ENCODE measurements at regions of chr14 and their contacts with region 1.

Region 1: GRCh38 chr14:22900081-22900799 is 17.2 kb downstream of the REM2 start:
- DNase-seq: peak in 2 of 5 donors; percentile 49 to 57
- H3K4me3 ChIP-seq: no peak overlapping the region
- H3K4me3 Mint-ChIP-seq: no peak overlapping the region
- H3K27ac ChIP-seq: no peak overlapping the region
- H3K27ac Mint-ChIP-seq: peak overlapping the region in 6 of 8 donors; percentile 0 to 65 (median 26)
- H3K4me1 ChIP-seq: peaks cover 7% of the 10 kb centered on the region
- H3K4me1 Mint-ChIP-seq: peaks cover 5 to 10% (median 5%) of the 10 kb centered on the region in 3 donors
- H3K27me3 ChIP-seq: no peaks in the 10 kb centered on the region
- H3K27me3 Mint-ChIP-seq: no peaks in the 10 kb centered on the region

Region 2: GRCh38 chr14:22822571-22823098 is 77.6 kb before region 1 on chr14:
- CTCF ChIA-PET with region 1: interaction called, 70 read pairs
- POLR2A ChIA-PET with region 1: no interaction called
- DNase-seq: peak; percentile 53 to 81 (median 57)
- H3K4me3 ChIP-seq: peak overlapping the region; percentile 13
- H3K4me3 Mint-ChIP-seq: peak overlapping the region in 6 of 7 donors; percentile 41 to 72 (median 66)
- H3K27ac ChIP-seq: no peak overlapping the region
- H3K27ac Mint-ChIP-seq: peak overlapping the region in 1 of 8 donors; percentile 15
- H3K4me1 ChIP-seq: peaks cover 19% of the 10 kb centered on the region
- H3K4me1 Mint-ChIP-seq: peaks cover 8 to 12% (median 9%) of the 10 kb centered on the region in 3 donors
- H3K27me3 ChIP-seq: no peaks in the 10 kb centered on the region
- H3K27me3 Mint-ChIP-seq: peaks cover 35 to 45% of the 10 kb centered on the region in 2 donors

Region 3: GRCh38 chr14:23009939-23010726 is 109.9 kb after region 1 on chr14 and contains the start of gene C14orf93:
- CTCF ChIA-PET with region 1: no interaction called
- POLR2A ChIA-PET with region 1: no interaction called
- DNase-seq: peak; percentile 70 to 84 (median 72)
- H3K4me3 ChIP-seq: peak within 1 kb of the TSS; percentile 85
- H3K4me3 Mint-ChIP-seq: peak within 1 kb of the TSS; percentile 90 to 99 (median 94)
- H3K27ac ChIP-seq: peak within 1 kb of the TSS; percentile 86
- H3K27ac Mint-ChIP-seq: peak within 1 kb of the TSS; percentile 92 to 98 (median 94)
- H3K4me1 ChIP-seq: peaks cover 36% of the 10 kb centered on the region
- H3K4me1 Mint-ChIP-seq: peaks cover 37 to 52% (median 52%) of the 10 kb centered on the region in 3 donors
- H3K27me3 ChIP-seq: no peaks in the 10 kb centered on the region
- H3K27me3 Mint-ChIP-seq: no peaks in the 10 kb centered on the region
- total RNA-seq, gene C14orf93: 7.5 to 8.3 TPM

Region 4: GRCh38 chr14:23034483-23035302 is 134.5 kb after region 1 on chr14 and contains the start of gene PSMB5:
- CTCF ChIA-PET with region 1: no interaction called
- POLR2A ChIA-PET with region 1: no interaction called
- DNase-seq: peak; percentile 75 to 93 (median 90)
- H3K4me3 ChIP-seq: peak within 1 kb of the TSS; percentile 80
- H3K4me3 Mint-ChIP-seq: peak within 1 kb of the TSS; percentile 83 to 98 (median 89)
- H3K27ac ChIP-seq: peak within 1 kb of the TSS; percentile 90
- H3K27ac Mint-ChIP-seq: peak within 1 kb of the TSS; percentile 92 to 100 (median 98)
- H3K4me1 ChIP-seq: peaks cover 19% of the 10 kb centered on the region
- H3K4me1 Mint-ChIP-seq: peaks cover 27 to 36% (median 35%) of the 10 kb centered on the region in 3 donors
- H3K27me3 ChIP-seq: no peaks in the 10 kb centered on the region
- H3K27me3 Mint-ChIP-seq: peaks cover 0 to 1% of the 10 kb centered on the region in 2 donors
- total RNA-seq, gene PSMB5: 186 to 198 TPM

Region 5: DNA sequence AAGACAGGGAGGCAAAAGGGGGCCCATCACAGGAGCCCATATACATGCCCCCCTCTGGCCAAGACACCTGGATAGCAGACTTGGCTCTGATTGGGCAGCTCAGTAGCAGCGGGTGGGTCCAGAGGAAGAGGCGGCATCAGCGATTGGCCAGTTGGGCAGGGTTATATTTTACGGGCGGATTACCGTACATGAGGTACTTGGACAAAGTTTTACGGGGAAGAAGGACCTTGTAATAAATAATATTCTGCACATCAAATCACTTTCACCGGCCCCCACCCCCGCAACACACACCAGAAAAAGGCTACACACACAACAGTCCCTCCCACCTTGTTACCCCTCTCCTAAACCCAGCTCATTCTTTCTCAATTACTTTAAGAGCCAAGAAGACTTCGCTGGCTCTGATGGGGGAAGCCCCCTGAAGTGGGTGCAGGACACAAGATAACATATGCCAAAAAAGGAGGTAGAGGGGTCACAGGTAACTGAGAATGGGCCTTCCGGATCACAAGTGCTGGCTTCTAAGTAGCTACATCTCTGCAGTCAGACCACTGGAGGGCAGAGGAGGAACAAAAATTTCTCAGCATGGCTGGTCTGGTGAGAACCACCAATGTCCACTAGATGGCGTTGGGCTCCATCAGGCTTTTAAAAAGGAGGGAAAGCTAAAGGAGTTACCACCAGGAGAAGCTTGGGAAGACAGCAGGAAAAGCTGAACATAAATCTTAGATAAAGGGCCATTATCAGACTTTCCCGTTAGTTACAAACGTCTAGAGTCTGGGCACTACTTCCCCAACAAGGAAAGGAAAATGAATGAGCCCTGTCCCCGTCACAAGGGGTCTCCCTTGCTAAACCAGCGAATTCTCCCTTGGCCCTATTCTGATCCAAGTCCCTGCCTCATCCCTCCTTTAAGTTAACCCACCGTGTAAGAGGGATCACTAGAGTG is 168.5 kb after region 1 on chr14:
- CTCF ChIA-PET with region 1: no interaction called
- POLR2A ChIA-PET with region 1: no interaction called
- DNase-seq: peak; percentile 49 to 79 (median 72)
- H3K4me3 ChIP-seq: no peak overlapping the region
- H3K4me3 Mint-ChIP-seq: peak overlapping the region in 6 of 7 donors; percentile 10 to 72 (median 48)
- H3K27ac ChIP-seq: no peak overlapping the region
- H3K27ac Mint-ChIP-seq: peak overlapping the region; percentile 49 to 96 (median 72)
- H3K4me1 ChIP-seq: peaks cover 28% of the 10 kb centered on the region
- H3K4me1 Mint-ChIP-seq: peaks cover 37 to 50% (median 41%) of the 10 kb centered on the region in 3 donors
- H3K27me3 ChIP-seq: no peaks in the 10 kb centered on the region
- H3K27me3 Mint-ChIP-seq: no peaks in the 10 kb centered on the region

Region 6: DNA sequence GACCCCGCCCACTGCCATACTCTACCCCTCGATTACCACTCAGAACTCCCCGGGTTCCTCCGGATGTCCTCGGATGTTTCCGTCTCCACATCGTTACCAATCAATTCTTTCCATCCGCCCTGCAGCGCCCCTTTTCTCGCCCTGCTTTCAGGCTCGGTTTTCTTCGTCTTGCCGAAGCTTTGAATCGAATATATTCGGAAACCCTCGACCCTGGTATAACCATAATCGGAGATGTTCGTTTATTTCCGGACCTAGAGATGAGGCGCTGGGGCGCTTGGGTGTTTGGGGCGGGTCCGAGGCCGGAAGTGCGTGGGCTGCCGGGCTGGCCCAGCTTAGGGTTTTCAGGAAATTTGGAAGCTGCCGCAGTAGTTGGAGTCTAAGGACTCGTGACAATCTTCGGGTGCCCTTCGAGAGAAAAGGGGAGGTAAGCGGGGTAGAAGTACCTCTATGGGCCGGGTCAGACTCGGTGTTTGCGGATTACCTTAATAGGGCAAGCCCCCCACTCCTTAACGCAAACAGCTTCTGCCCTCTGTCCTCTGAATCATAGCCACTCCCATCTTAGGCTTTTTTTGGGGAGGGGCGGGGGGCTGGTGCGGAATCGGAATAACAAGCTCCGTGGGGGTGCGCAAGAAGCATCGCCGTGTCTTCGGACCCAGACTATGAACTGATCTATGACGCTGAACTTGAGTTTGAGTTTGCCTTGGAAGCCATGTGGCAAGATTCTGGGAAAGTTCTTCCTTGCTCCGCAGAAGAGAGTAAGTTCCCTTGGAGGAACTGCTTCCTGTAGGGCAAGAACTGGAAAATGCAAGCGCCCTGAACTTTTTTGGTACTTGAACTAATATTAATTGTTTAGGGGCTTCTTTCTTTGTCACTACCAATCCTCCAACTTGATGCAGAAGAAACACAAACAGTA is 195.2 kb after region 1 on chr14 and contains the start of gene C14orf119:
- CTCF ChIA-PET with region 1: no interaction called
- POLR2A ChIA-PET with region 1: no interaction called
- DNase-seq: peak; percentile 99 to 100 (median 100)
- H3K4me3 ChIP-seq: peak within 1 kb of the TSS; percentile 97
- H3K4me3 Mint-ChIP-seq: no peak within 1 kb of the TSS
- H3K27ac ChIP-seq: peak within 1 kb of the TSS; percentile 97
- H3K27ac Mint-ChIP-seq: no peak within 1 kb of the TSS
- H3K4me1 ChIP-seq: peaks cover 38% of the 10 kb centered on the region
- H3K4me1 Mint-ChIP-seq: peaks cover 13 to 41% (median 36%) of the 10 kb centered on the region in 3 donors
- H3K27me3 ChIP-seq: no peaks in the 10 kb centered on the region
- H3K27me3 Mint-ChIP-seq: no peaks in the 10 kb centered on the region
- total RNA-seq, gene C14orf119: 52.5 to 55.6 TPM

Measured in CD8-positive, alpha-beta memory T cell (primary cell).